GM23248 (cell line): ENCODE measurements at regions of chr10 and their contacts with region 1.

Region 1: DNA sequence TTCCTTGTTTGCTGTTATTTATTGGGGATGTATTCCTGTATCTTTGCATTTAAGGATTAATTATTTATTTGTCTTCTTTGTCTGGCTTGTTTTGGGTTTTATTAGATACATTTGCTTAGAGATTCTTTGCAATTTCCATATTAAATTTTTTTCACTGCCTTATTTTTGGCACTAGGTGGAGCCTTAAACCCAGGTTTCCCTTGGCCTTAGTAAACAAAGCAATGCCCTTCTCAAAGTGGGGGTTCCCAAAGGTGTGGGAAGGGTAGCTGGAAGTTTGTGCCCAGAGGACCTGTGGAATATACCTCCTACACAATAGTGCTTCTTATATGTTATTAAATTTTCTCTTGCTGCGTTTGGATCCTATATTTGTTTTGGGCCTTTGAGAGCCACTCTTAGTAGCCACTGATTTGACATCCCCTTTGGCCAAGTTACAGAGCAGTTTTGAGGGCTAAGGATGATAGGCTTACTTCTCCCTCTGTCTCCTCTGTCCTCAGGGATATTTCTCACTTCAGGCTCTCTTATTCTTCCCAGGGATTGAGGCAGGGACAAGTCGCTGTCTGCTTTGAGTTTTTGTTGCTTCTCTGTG is 162.3 kb downstream of the ITGB1 start:
- DNase-seq: peak; percentile 53
- H3K4me3 ChIP-seq: no peak overlapping the region
- H3K27ac ChIP-seq: no peak overlapping the region
- H3K4me1 ChIP-seq: no peaks in the 10 kb centered on the region
- H3K27me3 ChIP-seq: no peaks in the 10 kb centered on the region

Region 2: DNA sequence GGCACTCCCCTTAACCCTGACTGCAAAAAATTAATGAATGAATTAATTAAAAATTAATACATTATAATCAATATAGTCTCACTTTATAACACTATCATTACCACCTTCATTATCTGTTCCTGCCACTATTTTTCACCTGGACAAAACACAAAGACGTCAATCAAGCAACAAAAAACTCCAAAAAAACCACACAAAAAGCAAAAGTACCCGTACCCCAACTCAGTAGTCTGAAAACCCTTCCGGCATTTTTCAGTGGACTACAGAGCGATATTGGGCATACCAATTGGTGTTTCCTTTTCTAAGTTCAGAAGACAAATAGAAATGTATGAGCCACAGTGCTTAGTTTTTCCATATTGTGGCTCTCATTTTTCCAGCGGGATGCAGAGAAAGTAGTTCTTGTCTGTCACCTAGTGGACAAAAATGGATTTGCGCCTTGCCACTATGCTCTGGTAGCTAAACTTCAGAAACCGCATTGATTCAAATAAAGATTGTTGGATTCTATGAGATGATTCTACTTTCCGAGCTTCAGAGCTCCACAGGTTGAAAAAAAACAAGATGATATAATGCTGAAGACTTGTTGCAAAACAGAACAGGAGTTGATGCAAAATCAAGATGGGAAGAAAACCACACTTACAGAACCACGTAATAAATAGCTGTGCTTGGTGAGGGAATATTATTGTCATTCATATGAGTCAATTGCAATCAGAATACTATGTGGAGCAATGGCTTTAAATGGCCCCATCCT is 213.0 kb after region 1 on chr10:
- in situ Hi-C with region 1: loop called (anchors 5 kb)
- DNase-seq: peak; percentile 89
- H3K4me3 ChIP-seq: peak overlapping the region; percentile 27
- H3K27ac ChIP-seq: peak overlapping the region; percentile 71
- H3K4me1 ChIP-seq: peaks cover 57% of the 10 kb centered on the region
- H3K27me3 ChIP-seq: no peaks in the 10 kb centered on the region

Region 3: DNA sequence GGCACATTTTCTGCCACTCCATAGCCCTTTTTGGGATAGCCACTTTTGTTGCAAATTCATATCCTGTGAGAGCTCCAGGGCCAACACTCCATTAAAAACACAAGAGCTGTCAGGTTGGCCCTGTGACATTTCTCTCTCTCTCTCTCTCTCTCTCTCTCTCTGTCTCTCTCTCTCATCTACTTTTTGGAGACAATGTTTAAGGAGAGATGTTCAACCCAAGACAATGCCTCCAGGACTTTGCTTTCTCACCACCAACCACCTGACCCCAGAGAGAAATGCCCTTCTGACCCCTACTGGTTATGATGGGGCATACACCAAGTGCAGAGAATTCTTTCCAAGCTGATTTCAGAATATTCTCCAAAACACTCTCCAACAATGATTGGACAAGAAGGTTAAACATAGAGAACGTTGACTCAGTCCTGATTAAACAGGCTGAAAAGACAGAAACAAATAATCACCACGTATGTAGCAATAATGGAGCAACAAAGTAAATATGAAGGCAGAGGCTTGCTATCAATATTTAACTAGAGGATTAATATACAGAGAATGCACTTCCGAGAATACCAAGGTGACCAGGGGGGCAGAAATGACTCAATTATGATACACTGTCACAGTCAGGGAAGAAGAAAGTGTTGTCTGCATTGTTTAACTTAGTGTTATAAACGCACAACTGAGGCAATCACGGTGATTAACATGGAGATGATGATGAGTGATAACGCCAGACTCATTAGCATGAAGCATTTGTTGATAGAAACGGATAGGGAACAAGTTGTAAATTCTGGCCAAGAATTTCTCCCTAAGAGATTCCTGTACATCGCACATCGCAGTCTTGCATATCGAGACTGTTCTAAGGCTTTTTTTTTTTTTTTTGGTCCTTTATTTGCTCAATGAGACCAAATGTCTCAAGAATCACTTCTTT is 360.3 kb after region 1 on chr10:
- in situ Hi-C with region 1: loop called (anchors 25 kb)
- DNase-seq: peak; percentile 89
- H3K4me3 ChIP-seq: 0 out of 2 replicates have a peak overlapping the region, but pooled peaks have one; percentile 7
- H3K27ac ChIP-seq: peak overlapping the region; percentile 72
- H3K4me1 ChIP-seq: peaks cover 38% of the 10 kb centered on the region
- H3K27me3 ChIP-seq: no peaks in the 10 kb centered on the region

Region 4: DNA sequence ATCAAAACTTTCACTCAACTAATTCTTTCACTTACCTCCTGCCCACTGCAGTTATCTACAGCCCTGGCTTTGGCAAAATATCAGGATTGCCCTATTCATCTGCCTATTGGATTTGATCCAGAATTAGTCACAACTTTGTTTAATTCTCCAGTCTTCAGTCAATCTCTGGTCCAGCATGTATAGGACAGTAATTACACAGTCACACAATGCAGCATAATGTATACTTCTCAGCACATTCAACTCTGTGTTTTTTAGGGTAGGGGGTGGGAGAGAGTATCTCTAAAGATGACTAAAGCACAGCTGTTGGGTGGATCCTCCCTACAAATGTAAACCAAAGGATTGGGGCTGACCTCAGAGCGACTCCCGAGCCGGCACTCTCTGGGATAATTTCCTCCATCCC is 556.5 kb after region 1 on chr10:
- in situ Hi-C with region 1: no loop called
- DNase-seq: peak; percentile 87
- H3K4me3 ChIP-seq: no peak overlapping the region; the same call in 1 of the 2 replicates
- H3K27ac ChIP-seq: no peak overlapping the region
- H3K4me1 ChIP-seq: peaks cover 16% of the 10 kb centered on the region
- H3K27me3 ChIP-seq: no peaks in the 10 kb centered on the region

Region 5: GRCh38 chr10:33715303-33715975 is 919.7 kb after region 1 on chr10:
- in situ Hi-C with region 1: no loop called
- DNase-seq: no peak
- H3K4me3 ChIP-seq: no peak overlapping the region
- H3K27ac ChIP-seq: no peak overlapping the region
- H3K4me1 ChIP-seq: no peaks in the 10 kb centered on the region
- H3K27me3 ChIP-seq: no peaks in the 10 kb centered on the region

Region 6: GRCh38 chr10:34637418-34637911 is 1841.8 kb after region 1 on chr10:
- in situ Hi-C with region 1: loop called (anchors 25 kb)
- DNase-seq: peak; percentile 46
- H3K4me3 ChIP-seq: no peak overlapping the region
- H3K27ac ChIP-seq: no peak overlapping the region
- H3K4me1 ChIP-seq: peaks cover 6% of the 10 kb centered on the region; the same call in 1 of the 2 replicates
- H3K27me3 ChIP-seq: no peaks in the 10 kb centered on the region